IMR-90 (cell line): ENCODE measurements at regions of chr1 and their contacts with region 1.

Region 1: DNA sequence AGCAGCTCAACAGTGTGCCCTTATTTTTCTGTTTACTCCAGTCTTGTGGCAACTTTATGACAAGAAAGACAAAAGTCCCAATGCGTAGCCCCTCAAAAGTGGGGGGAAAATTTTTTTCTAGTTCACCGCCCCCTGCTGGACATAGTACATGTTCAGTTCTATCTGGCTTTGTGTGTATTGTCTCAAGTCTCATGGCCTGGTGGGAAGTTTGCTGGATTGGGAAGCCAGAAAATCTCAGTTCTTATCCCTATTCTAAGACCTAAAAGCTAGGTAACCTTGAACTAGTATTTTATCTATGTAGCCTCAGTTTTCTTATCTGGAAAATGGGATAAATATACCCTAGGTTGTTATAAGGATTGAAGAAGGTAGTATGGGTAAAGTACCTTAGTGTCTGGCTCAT is 55.8 kb upstream of the LDLRAP1 start:
- DNase-seq: no peak
- ATAC-seq: no peak
- H3K4me3 ChIP-seq: no peak overlapping the region
- H3K27ac ChIP-seq: no peak overlapping the region
- H3K4me1 ChIP-seq: no peaks in the 10 kb centered on the region
- H3K27me3 ChIP-seq: no peaks in the 10 kb centered on the region
- CTCF ChIP-seq: 0 out of 2 replicates have a peak, but pooled peaks have one; percentile 19
- POLR2A ChIP-seq: no peak
- RAD21 ChIP-seq: no peak

Region 2: GRCh38 chr1:25430666-25431505 is 56.7 kb before region 1 on chr1 and contains the start of gene MACO1:
- CTCF ChIA-PET with region 1: interaction called, 3 read pairs
- POLR2A ChIA-PET with region 1: no interaction called
- dilution Hi-C with region 1: no loop called
- in situ Hi-C with region 1: no loop called
- intact Hi-C with region 1: loop called (anchors 10 kb)
- DNase-seq: peak; percentile 94
- ATAC-seq: peak; percentile 94
- H3K4me3 ChIP-seq: peak within 1 kb of the TSS; percentile 90
- H3K27ac ChIP-seq: peak within 1 kb of the TSS; percentile 75
- H3K4me1 ChIP-seq: peaks cover 8% of the 10 kb centered on the region
- H3K27me3 ChIP-seq: no peaks in the 10 kb centered on the region
- CTCF ChIP-seq: no peak
- POLR2A ChIP-seq: no peak
- RAD21 ChIP-seq: no peak
- total RNA-seq, gene MACO1: 12.7 and 18.1 TPM in 2 replicates